CD14-positive monocyte (primary cell): ENCODE measurements at regions of chr7 and their contacts with region 1.

Region 1: DNA sequence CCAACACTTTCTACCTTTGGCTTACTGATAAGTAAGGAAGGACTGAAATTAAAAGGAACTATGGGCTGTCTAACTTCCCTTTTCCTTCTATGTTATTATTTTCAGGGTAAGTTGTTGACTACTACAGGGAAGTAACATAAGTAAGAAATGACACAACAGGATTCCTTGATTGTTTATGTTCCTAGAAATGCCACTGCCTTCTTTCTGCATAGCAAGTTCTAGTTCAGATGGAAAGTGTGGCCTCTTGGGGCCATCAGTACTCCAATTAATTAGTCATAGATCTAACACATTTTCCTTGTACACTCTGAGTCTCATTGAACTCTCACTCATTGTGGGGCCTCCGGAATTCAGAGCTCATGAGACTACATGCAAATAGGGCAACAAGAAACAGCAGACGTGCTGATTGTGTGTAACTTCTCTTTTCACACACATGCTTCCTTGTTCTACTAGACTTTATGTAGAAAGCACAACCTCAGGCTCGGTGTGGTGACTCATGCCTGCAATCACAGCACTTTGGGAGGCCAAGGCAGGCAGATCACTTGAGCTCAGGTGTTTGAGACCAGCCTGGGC is 35.3 kb upstream of the HIBADH start:
- DNase-seq: peak; percentile 86 to 93 (median 91)
- H3K4me3 ChIP-seq: peak overlapping the region in 1 of 3 experiments; percentile 17
- H3K4me3 Mint-ChIP-seq: peak overlapping the region in 1 of 2 donors; percentile 39
- H3K27ac ChIP-seq: peak overlapping the region; percentile 65 to 89
- H3K27ac Mint-ChIP-seq: peak overlapping the region; percentile 88 to 99 (median 95)
- H3K4me1 ChIP-seq: peaks cover 34 to 44% of the 10 kb centered on the region in 2 donors
- H3K4me1 Mint-ChIP-seq: peaks cover 36% of the 10 kb centered on the region
- H3K27me3 ChIP-seq: no peaks in the 10 kb centered on the region
- H3K27me3 Mint-ChIP-seq: peaks cover 0 to 2% (median 0%) of the 10 kb centered on the region in 3 donors
- CTCF ChIP-seq: no peak

Region 2: DNA sequence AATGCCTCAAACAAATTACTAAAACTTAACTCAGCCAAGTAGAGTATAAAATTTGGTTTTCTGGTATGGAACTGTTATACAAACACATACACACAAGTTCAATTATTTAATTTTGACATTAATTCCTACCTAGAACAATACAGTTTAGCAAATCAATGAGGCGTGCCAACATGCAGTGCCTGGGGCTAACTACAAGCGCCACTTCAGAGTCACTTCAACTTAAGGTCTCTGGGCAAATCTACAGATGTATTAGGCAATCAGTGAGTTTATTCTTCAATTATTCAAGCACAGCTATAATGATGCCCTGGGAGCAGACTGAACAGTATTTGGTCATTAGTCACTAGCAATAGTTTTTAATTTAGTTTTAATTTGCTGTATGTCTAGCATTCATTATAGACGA is 86.9 kb before region 1 on chr7:
- intact Hi-C with region 1: no loop called
- DNase-seq: no peak
- H3K4me3 ChIP-seq: no peak overlapping the region
- H3K4me3 Mint-ChIP-seq: no peak overlapping the region
- H3K27ac ChIP-seq: no peak overlapping the region
- H3K27ac Mint-ChIP-seq: no peak overlapping the region
- H3K4me1 ChIP-seq: no peaks in the 10 kb centered on the region
- H3K4me1 Mint-ChIP-seq: peaks cover 3% of the 10 kb centered on the region
- H3K27me3 ChIP-seq: no peaks in the 10 kb centered on the region
- H3K27me3 Mint-ChIP-seq: no peaks in the 10 kb centered on the region
- CTCF ChIP-seq: no peak

Region 3: GRCh38 chr7:27662490-27663205 is 35.3 kb before region 1 on chr7 and contains the start of gene HIBADH:
- intact Hi-C with region 1: loop called in 1 of 2 experiments (anchors 5 kb)
- DNase-seq: peak; percentile 99 to 100 (median 99)
- H3K4me3 ChIP-seq: peak within 1 kb of the TSS; percentile 62 to 95 (median 85)
- H3K4me3 Mint-ChIP-seq: peak within 1 kb of the TSS; percentile 88
- H3K27ac ChIP-seq: peak within 1 kb of the TSS; percentile 73 to 75
- H3K27ac Mint-ChIP-seq: peak within 1 kb of the TSS; percentile 80 to 91 (median 86)
- H3K4me1 ChIP-seq: peaks cover 19 to 25% of the 10 kb centered on the region in 2 donors
- H3K4me1 Mint-ChIP-seq: peaks cover 18% of the 10 kb centered on the region
- H3K27me3 ChIP-seq: no peaks in the 10 kb centered on the region
- H3K27me3 Mint-ChIP-seq: peaks cover 0 to 1% (median 0%) of the 10 kb centered on the region in 3 donors
- CTCF ChIP-seq: peak; percentile 16
- polyA plus RNA-seq, gene HIBADH: 8.9 to 29.1 (median 26.5) TPM